Activated CD4-positive, alpha-beta T cell treated with anti-CD3 and anti-CD28 coated beads for 36 hours (primary cell): ENCODE measurements at regions of chr17 and their contacts with region 1.

Region 1: DNA sequence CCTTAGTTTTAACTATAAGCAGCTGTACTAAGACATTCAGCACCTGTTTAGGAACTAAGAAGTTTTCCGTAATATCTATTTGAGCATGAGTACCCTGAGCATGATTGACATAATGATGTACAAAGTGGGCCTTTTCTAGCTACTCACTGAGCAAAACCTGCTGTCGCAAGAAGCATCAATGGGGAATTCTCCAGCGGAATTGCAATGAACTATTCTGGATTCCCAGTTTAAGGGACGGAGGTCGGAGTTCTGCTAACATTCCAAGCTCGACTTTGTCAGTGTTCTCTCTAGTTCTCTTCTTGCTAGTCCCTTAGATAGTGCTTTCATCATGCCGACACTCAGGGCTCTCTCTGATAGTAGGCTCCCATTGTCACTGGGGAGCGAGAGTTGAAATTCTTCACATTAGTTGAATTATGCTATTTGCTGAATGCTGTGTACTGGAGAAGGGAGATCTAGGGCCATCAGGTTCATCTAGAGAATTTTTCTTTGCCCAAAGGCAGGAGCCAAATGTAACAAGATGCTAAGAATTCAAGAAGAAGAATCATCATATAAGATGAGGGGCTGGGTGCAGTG is 40.2 kb upstream of the MYH2 start:
- DNase-seq: no peak
- ATAC-seq: no peak
- H3K4me3 Mint-ChIP-seq: no peak overlapping the region
- H3K27ac Mint-ChIP-seq: no peak overlapping the region
- H3K4me1 Mint-ChIP-seq: no peaks in the 10 kb centered on the region
- H3K27me3 Mint-ChIP-seq: peaks cover 13% of the 10 kb centered on the region

Region 2: GRCh38 chr17:10702574-10702973 is 112.9 kb after region 1 on chr17:
- CTCF ChIA-PET with region 1: no interaction called
- POLR2A ChIA-PET with region 1: no interaction called
- intact Hi-C with region 1: no loop called
- DNase-seq: no peak
- ATAC-seq: no peak
- H3K4me3 Mint-ChIP-seq: no peak overlapping the region
- H3K27ac Mint-ChIP-seq: peak overlapping the region; percentile 8
- H3K4me1 Mint-ChIP-seq: peaks cover 58% of the 10 kb centered on the region
- H3K27me3 Mint-ChIP-seq: no peaks in the 10 kb centered on the region

Region 3: DNA sequence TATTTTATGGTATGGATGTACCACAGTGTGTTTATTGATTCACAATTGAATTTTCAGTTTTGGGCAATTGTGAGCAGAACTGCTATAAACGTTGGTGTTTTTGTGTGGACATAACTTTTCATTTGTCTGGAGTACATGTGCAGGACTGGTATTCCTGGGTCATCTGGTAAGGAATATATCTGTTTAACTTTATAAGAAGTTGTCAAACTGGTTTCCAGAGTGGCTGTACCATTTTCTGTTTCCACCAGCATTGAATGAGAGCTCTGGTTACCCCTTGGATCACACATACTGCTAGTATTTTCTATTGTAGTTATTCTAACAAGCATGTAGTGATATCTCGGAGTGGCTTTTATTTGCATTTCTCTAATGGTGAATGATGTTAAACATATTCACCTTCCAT is 190.0 kb after region 1 on chr17:
- CTCF ChIA-PET with region 1: no interaction called
- POLR2A ChIA-PET with region 1: no interaction called
- intact Hi-C with region 1: loop called in 1 of 2 experiments (anchors 5 kb)
- DNase-seq: no peak
- ATAC-seq: no peak
- H3K4me3 Mint-ChIP-seq: no peak overlapping the region
- H3K27ac Mint-ChIP-seq: no peak overlapping the region
- H3K4me1 Mint-ChIP-seq: no peaks in the 10 kb centered on the region
- H3K27me3 Mint-ChIP-seq: no peaks in the 10 kb centered on the region